Breast epithelium (tissue), 4 donors: ENCODE measurements at regions of chr18 and their contacts with region 1.

Region 1: DNA sequence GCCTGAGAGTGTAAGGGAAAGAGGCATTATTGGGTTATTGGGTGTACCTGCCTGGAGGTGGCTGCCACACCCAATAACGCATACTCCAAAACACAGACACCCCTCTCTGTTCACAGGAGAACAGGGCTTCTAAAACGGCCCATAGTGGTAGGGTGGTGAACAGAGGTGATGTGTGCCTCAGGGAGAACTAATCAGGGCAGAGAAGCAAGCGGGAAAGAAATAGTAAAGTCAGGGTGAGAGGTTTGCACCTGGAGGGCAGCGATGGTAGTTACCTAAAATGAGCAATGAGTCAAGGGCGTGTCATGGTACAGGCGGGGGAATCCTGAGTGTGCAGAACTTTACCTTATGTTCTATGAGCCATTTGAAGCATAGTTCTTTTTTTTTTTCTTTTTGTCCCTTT is 21.6 kb upstream of the VPS4B start:
- DNase-seq: no peak
- H3K4me3 ChIP-seq: no peak overlapping the region
- H3K27ac ChIP-seq: no peak overlapping the region
- H3K4me1 ChIP-seq: no peaks in the 10 kb centered on the region
- H3K27me3 ChIP-seq: no peaks in the 10 kb centered on the region
- CTCF ChIP-seq: no peak
- POLR2A ChIP-seq: no peak

Region 2: DNA sequence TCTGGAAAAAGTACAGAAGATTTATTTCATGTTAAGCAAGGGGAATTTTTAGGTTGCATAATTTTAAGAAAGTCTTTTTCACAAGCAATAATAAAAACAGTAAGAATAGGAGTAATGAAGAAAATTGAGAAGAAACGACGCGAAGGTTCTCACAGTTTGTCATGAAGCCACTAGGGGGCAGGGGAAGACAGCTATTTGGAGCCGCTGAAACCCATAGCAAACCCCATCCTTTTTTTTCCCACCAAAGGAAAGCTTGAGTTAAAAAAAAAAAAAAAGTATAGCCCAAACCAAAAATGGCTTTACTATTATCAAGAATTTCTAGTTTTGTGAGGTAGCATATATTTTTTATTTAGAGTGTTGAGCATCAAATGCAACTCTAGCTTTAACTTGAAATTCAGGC is 427.6 kb before region 1 on chr18:
- intact Hi-C with region 1: loop called (anchors 2 kb)
- DNase-seq: peak in 1 of 2 donors; percentile 33
- H3K4me3 ChIP-seq: no peak overlapping the region
- H3K27ac ChIP-seq: no peak overlapping the region
- H3K4me1 ChIP-seq: no peaks in the 10 kb centered on the region
- H3K27me3 ChIP-seq: no peaks in the 10 kb centered on the region
- CTCF ChIP-seq: peak; percentile 69 to 86 (median 76)
- POLR2A ChIP-seq: no peak

Region 3: DNA sequence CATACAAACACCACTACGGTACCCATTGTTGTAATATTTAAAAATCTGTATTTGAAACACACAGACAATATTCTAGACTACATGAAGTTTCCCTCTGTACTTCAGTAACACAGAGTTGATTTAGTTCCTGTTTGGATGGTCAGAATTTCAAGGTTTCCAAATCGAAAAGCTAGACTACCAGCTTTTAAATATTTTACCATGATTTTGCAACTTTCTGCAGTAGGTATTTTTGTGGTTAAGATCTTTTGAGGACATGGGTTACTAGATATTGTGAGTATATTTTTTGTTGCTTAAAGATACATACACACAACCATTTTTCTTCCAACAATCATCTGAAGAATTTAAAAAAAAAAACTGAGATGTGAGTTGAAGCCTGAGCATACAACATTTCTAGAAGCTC is 43.8 kb after region 1 on chr18:
- intact Hi-C with region 1: no loop called
- DNase-seq: no peak
- H3K4me3 ChIP-seq: no peak overlapping the region
- H3K27ac ChIP-seq: no peak overlapping the region
- H3K4me1 ChIP-seq: no peaks in the 10 kb centered on the region
- H3K27me3 ChIP-seq: no peaks in the 10 kb centered on the region
- CTCF ChIP-seq: no peak
- POLR2A ChIP-seq: no peak

Region 4: GRCh38 chr18:64119916-64120315 is 676.1 kb after region 1 on chr18:
- intact Hi-C with region 1: no loop called
- DNase-seq: no peak
- H3K4me3 ChIP-seq: no peak overlapping the region
- H3K27ac ChIP-seq: no peak overlapping the region
- H3K4me1 ChIP-seq: no peaks in the 10 kb centered on the region
- H3K27me3 ChIP-seq: no peaks in the 10 kb centered on the region
- CTCF ChIP-seq: no peak
- POLR2A ChIP-seq: no peak